GM23248 (cell line): ENCODE measurements at regions of chrX and their contacts with region 1.

Region 1: DNA sequence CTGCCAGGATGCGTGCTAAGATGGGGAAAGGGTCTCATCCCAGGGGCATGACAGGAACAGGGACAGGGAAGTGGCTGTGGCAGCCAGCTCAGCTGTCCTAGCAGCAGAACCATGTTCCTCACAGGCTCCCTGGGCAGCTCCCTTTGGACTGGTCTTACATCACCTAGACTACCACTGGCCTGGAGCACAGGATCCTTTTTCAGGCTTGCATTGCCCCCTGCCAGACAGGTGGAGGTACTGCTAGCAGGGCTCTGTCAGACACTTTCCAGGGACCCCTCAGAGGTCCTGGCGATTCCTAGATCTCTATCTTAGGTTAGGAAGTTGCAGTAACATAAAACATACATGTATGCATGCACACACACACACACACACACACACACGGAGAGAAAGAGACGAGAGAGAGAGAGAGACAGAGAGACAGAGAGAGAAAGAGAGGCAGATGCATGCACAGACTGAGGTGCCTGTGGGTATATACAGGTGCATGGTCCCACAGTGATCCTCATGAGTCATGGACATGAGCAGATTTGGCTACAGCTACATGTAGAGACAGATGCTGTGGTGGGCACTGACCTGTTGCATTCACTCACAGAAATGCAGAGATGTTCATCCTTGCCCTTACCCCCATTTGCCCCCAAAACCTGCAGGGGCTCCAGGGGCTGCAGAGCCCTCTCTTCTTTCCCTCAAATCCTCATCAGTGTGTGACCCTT is 63.6 kb downstream of the STARD8 start:
- DNase-seq: peak; percentile 60
- H3K4me3 ChIP-seq: no peak overlapping the region
- H3K27ac ChIP-seq: no peak overlapping the region
- H3K4me1 ChIP-seq: no peaks in the 10 kb centered on the region
- H3K27me3 ChIP-seq: no peaks in the 10 kb centered on the region

Region 2: GRCh38 chrX:68196939-68197791 is 513.9 kb before region 1 on chrX:
- in situ Hi-C with region 1: loop called (anchors 25 kb)
- DNase-seq: peak; percentile 54
- H3K4me3 ChIP-seq: no peak overlapping the region
- H3K27ac ChIP-seq: no peak overlapping the region
- H3K4me1 ChIP-seq: no peaks in the 10 kb centered on the region
- H3K27me3 ChIP-seq: no peaks in the 10 kb centered on the region

Region 3: GRCh38 chrX:68532831-68533533 is 178.0 kb before region 1 on chrX:
- in situ Hi-C with region 1: loop called (anchors 25 kb)
- DNase-seq: peak; percentile 4
- H3K4me3 ChIP-seq: no peak overlapping the region
- H3K27ac ChIP-seq: no peak overlapping the region
- H3K4me1 ChIP-seq: no peaks in the 10 kb centered on the region
- H3K27me3 ChIP-seq: no peaks in the 10 kb centered on the region

Region 4: GRCh38 chrX:68842781-68843581 is 132.0 kb after region 1 on chrX:
- in situ Hi-C with region 1: no loop called
- DNase-seq: no peak
- H3K4me3 ChIP-seq: no peak overlapping the region
- H3K27ac ChIP-seq: no peak overlapping the region
- H3K4me1 ChIP-seq: no peaks in the 10 kb centered on the region
- H3K27me3 ChIP-seq: no peaks in the 10 kb centered on the region

Region 5: DNA sequence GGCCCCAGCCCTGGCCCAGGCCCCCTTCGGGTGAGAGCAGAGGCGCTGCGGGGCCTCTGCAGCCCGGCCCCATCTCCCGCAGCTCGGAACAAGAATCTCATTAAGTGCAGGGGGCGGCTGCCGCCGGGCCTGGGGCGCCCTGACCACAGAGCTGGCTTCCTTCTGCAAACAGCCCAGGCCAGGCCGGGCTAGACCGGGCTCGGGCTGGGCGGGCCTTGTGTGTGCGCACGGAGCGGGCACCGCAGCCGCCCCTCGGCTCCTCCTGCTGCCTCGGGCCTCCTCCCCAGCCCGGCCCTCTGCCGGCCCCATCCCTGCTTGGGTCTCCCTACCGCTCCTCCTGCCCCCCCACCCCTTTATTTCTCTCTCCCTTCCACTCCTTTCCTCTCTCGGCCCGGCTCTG is 201.1 kb after region 1 on chrX:
- in situ Hi-C with region 1: no loop called
- DNase-seq: no peak
- H3K4me3 ChIP-seq: no peak overlapping the region
- H3K27ac ChIP-seq: no peak overlapping the region
- H3K4me1 ChIP-seq: no peaks in the 10 kb centered on the region
- H3K27me3 ChIP-seq: no peaks in the 10 kb centered on the region